ENCODE measurements at regions of chr3 and their contacts with region 1.

Region 1: GRCh38 chr3:149512209-149512782 is 37.8 kb downstream of the TM4SF4 start:
- DNase-seq: peak; percentile 60
- H3K4me3 ChIP-seq: no peak overlapping the region
- H3K27ac ChIP-seq: no peak overlapping the region
- H3K4me1 ChIP-seq: peaks cover 0 to 7% (median 0%) of the 10 kb centered on the region in 4 donors
- H3K27me3 ChIP-seq: peaks cover 3% of the 10 kb centered on the region
- CTCF ChIP-seq: peak; percentile 67 to 77 (median 73)
- EP300 ChIP-seq: no peak
- POLR2A ChIP-seq: no peak

Region 2: DNA sequence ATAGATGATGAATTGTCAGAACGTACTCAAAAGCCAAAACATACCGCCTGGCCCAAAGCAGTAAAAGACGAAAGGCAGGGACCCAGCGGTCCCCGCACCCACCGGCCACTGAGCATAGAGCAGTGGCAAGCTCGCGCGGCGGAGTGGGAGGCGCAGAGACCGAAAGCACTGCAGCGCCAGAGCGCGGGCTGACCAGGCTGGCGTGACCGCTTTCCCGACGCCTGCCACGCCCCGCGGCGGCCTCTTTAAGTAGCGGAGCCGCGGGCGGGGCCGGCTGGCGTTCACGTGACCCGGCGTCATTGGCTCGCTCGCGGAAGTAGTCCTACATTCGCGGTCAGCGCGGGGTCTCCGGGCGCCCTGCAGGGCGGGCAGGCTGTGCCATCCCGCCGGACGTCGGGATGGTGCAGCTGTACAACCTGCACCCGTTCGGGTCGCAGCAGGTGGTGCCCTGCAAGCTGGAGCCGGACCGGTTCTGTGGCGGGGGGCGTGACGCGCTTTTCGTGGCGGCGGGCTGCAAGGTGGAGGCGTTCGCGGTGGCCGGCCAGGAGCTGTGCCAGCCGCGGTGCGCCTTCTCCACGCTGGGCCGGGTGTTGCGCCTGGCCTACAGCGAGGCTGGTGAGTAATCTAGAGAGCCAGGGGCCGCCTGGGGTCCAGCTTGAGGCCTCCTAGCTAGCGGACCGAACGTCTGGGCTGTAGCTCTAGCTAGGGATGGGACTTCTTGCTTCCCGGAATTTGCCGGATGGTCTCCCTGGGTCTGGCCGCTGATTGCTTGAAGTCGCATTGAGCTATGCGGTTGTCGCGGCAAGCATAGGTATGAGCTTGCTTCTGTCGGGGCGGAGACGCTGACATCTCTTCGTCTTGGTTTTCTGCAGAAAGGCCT is 382.7 kb before region 1 on chr3 and contains the start of gene HPS3:
- in situ Hi-C with region 1: no loop called
- intact Hi-C with region 1: no loop called
- DNase-seq: peak; percentile 94
- H3K4me3 ChIP-seq: peak within 1 kb of the TSS; percentile 91 to 93 (median 91)
- H3K27ac ChIP-seq: peak within 1 kb of the TSS; percentile 91 to 96 (median 94)
- H3K4me1 ChIP-seq: peaks cover 5 to 40% (median 17%) of the 10 kb centered on the region in 4 donors
- H3K27me3 ChIP-seq: no peaks in the 10 kb centered on the region
- CTCF ChIP-seq: peak in 1 of 5 experiments; percentile 6
- EP300 ChIP-seq: no peak
- POLR2A ChIP-seq: peak; percentile 87
- total RNA-seq, gene HPS3: 10.0 to 20.2 (median 17.9) TPM

Region 3: GRCh38 chr3:149203758-149204157 is 308.5 kb before region 1 on chr3:
- in situ Hi-C with region 1: no loop called
- intact Hi-C with region 1: no loop called
- DNase-seq: no peak
- H3K4me3 ChIP-seq: no peak overlapping the region
- H3K27ac ChIP-seq: no peak overlapping the region
- H3K4me1 ChIP-seq: no peaks in the 10 kb centered on the region
- H3K27me3 ChIP-seq: no peaks in the 10 kb centered on the region
- CTCF ChIP-seq: no peak
- EP300 ChIP-seq: no peak
- POLR2A ChIP-seq: no peak

Region 4: GRCh38 chr3:149717391-149718056 is 205.2 kb after region 1 on chr3:
- in situ Hi-C with region 1: loop called (anchors 5 to 25 kb)
- intact Hi-C with region 1: loop called (anchors 5 kb)
- DNase-seq: peak; percentile 41
- H3K4me3 ChIP-seq: peak overlapping the region in 1 of 4 donors; percentile 39
- H3K27ac ChIP-seq: no peak overlapping the region
- H3K4me1 ChIP-seq: peaks cover 0 to 8% (median 3%) of the 10 kb centered on the region in 4 donors
- H3K27me3 ChIP-seq: no peaks in the 10 kb centered on the region
- CTCF ChIP-seq: peak; percentile 67 to 79 (median 75)
- EP300 ChIP-seq: no peak
- POLR2A ChIP-seq: no peak

Region 5: DNA sequence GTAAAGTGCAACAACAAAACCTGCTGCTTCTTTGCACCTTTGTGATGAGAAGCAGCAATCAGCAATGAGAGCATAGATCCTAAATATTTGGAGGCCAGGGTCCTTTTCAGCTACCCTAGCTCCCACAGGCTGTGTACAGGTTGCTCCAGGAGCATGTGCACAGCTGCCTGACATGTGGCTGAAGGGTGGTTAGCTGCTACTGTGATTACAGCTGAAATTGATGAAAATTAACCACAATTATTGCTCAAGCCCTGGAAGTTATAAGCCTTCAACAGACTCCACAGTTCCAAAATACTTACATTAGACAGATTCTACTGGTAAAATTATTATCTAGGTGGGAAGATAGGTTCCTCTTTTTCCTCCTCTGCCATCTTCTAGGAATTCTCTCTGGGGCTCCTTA is 211.5 kb after region 1 on chr3:
- in situ Hi-C with region 1: loop called (anchors 5 to 25 kb)
- intact Hi-C with region 1: loop called (anchors 5 kb)
- DNase-seq: no peak
- H3K4me3 ChIP-seq: no peak overlapping the region
- H3K27ac ChIP-seq: no peak overlapping the region
- H3K4me1 ChIP-seq: no peaks in the 10 kb centered on the region
- H3K27me3 ChIP-seq: peaks cover 3% of the 10 kb centered on the region
- CTCF ChIP-seq: no peak
- EP300 ChIP-seq: no peak
- POLR2A ChIP-seq: no peak

Measured in transverse colon (tissue), 4 donors.